Transverse colon (tissue), 4 donors: ENCODE measurements at regions of chr14 and their contacts with region 1.

Region 1: GRCh38 chr14:84988357-84988756 is 541.6 kb upstream of the FLRT2 start:
- DNase-seq: no peak
- H3K4me3 ChIP-seq: no peak overlapping the region
- H3K27ac ChIP-seq: no peak overlapping the region
- H3K4me1 ChIP-seq: no peaks in the 10 kb centered on the region
- H3K27me3 ChIP-seq: no peaks in the 10 kb centered on the region
- CTCF ChIP-seq: no peak
- EP300 ChIP-seq: no peak
- POLR2A ChIP-seq: no peak

Region 2: GRCh38 chr14:83294941-83295340 is 1693.4 kb before region 1 on chr14:
- in situ Hi-C with region 1: no loop called
- intact Hi-C with region 1: loop called (anchors 5 kb)
- DNase-seq: no peak
- H3K4me3 ChIP-seq: no peak overlapping the region
- H3K27ac ChIP-seq: no peak overlapping the region
- H3K4me1 ChIP-seq: no peaks in the 10 kb centered on the region
- H3K27me3 ChIP-seq: no peaks in the 10 kb centered on the region
- CTCF ChIP-seq: no peak
- EP300 ChIP-seq: no peak
- POLR2A ChIP-seq: no peak

Region 3: DNA sequence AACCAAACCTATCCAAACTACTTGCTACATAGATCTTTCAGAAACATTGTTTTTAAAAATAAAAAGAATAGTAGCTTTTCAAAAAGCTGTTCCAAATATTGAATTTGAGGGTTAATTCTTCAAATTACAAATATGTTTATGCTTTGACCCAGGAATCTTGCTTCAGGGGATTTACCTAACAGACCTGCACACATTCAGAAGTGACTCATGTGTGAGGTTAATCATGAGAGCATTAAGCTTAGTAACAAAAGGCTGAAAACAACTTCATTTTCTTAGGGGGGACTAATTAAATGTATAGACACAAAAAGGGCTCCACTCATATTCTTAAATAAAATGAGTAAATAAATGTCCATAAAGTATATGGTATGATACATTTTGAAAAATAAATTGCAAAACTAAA is 130.8 kb before region 1 on chr14:
- in situ Hi-C with region 1: no loop called
- intact Hi-C with region 1: no loop called
- DNase-seq: no peak
- H3K4me3 ChIP-seq: no peak overlapping the region
- H3K27ac ChIP-seq: no peak overlapping the region
- H3K4me1 ChIP-seq: no peaks in the 10 kb centered on the region
- H3K27me3 ChIP-seq: no peaks in the 10 kb centered on the region
- CTCF ChIP-seq: no peak
- EP300 ChIP-seq: no peak
- POLR2A ChIP-seq: no peak

Region 4: DNA sequence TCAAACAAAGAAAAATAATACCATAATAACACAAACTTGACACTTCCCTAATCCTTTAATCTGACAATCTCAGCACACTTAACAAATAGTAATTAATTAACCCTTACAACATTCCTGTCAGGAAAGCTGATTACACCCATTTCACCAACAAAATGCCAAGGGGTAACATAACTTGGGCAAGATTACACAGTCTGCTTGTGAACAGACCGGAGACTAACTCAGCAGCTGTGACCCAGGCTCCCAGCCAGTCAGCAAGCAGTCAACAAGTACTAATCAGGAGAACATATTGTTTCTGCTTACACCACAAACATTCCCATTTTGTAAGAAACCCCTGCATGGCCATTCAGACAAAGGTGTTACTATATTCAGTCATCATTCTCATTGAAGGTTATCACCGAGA is 50.9 kb before region 1 on chr14:
- in situ Hi-C with region 1: no loop called
- intact Hi-C with region 1: no loop called
- DNase-seq: no peak
- H3K4me3 ChIP-seq: no peak overlapping the region
- H3K27ac ChIP-seq: no peak overlapping the region
- H3K4me1 ChIP-seq: no peaks in the 10 kb centered on the region
- H3K27me3 ChIP-seq: no peaks in the 10 kb centered on the region
- CTCF ChIP-seq: no peak
- EP300 ChIP-seq: no peak
- POLR2A ChIP-seq: no peak

Region 5: GRCh38 chr14:86050072-86050683 is 1061.8 kb after region 1 on chr14:
- in situ Hi-C with region 1: no loop called
- intact Hi-C with region 1: loop called (anchors 5 kb)
- DNase-seq: no peak
- H3K4me3 ChIP-seq: no peak overlapping the region
- H3K27ac ChIP-seq: no peak overlapping the region
- H3K4me1 ChIP-seq: no peaks in the 10 kb centered on the region
- H3K27me3 ChIP-seq: no peaks in the 10 kb centered on the region
- CTCF ChIP-seq: no peak
- EP300 ChIP-seq: no peak
- POLR2A ChIP-seq: no peak

Region 6: GRCh38 chr14:86279405-86279804 is 1291.0 kb after region 1 on chr14:
- in situ Hi-C with region 1: no loop called
- intact Hi-C with region 1: no loop called
- DNase-seq: no peak
- H3K4me3 ChIP-seq: no peak overlapping the region
- H3K27ac ChIP-seq: no peak overlapping the region
- H3K4me1 ChIP-seq: no peaks in the 10 kb centered on the region
- H3K27me3 ChIP-seq: no peaks in the 10 kb centered on the region
- CTCF ChIP-seq: no peak
- EP300 ChIP-seq: no peak
- POLR2A ChIP-seq: no peak